ENCODE measurements at regions of chr2 and their contacts with region 1.

Region 1: GRCh38 chr2:54558188-54559005 is 102.3 kb downstream of the SPTBN1 start:
- DNase-seq: peak; percentile 71 to 72
- H3K4me3 ChIP-seq: peak overlapping the region; percentile 84 to 99 (median 94)
- H3K27ac ChIP-seq: peak overlapping the region; percentile 80
- H3K4me1 ChIP-seq: peaks cover 3 to 11% (median 8%) of the 10 kb centered on the region in 4 experiments
- H3K27me3 ChIP-seq: no peaks in the 10 kb centered on the region
- CTCF ChIP-seq: no peak
- EP300 ChIP-seq: no peak; a peak in 1 of 3 replicates
- POLR2A ChIP-seq: peak; percentile 66 to 87; a peak in 2 of 3 replicates
- RAD21 ChIP-seq: no peak

Region 2: GRCh38 chr2:54522624-54523281 is 35.6 kb before region 1 on chr2:
- CTCF ChIA-PET with region 1: interaction called, 21 read pairs
- POLR2A ChIA-PET with region 1: interaction called, 9 read pairs
- DNase-seq: peak; percentile 50 to 68
- H3K4me3 ChIP-seq: no peak overlapping the region
- H3K27ac ChIP-seq: no peak overlapping the region
- H3K4me1 ChIP-seq: peaks cover 0 to 3% (median under 1%) of the 10 kb centered on the region in 4 experiments; a peak in 3 of 7 replicates
- H3K27me3 ChIP-seq: no peaks in the 10 kb centered on the region
- CTCF ChIP-seq: peak; percentile 62 to 77 (median 76)
- EP300 ChIP-seq: no peak
- POLR2A ChIP-seq: no peak
- RAD21 ChIP-seq: peak; percentile 87 to 90

Region 3: DNA sequence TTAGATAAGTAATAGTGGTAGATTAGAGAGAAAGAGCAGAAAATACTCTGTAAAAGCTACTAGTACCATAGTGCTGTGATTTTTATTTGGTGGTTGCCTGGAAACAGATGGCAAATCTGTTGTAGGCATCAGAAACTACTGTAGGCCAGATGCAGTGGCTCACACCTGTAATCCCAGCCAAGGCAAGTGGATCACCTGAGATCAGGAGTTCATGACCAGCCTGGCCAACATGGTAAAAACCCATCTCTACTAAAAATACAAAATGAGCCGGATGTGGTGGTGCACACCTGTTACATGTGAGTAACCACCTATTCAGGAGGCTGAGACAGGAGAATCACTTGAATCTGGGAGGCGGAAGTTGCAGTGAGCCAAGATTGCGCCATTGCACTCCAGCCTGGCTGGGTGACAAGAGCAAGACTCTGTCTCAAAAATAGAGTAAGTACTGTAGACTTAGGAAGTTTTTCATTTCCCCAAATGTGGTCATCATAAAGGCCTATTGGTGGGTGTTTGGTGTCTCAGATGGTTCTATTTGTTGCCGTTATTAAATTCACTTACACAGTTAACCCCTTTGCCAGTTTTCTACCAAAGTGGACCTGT is 22.7 kb before region 1 on chr2:
- CTCF ChIA-PET with region 1: interaction called, 6 read pairs
- POLR2A ChIA-PET with region 1: interaction called, 30 read pairs
- DNase-seq: no peak
- H3K4me3 ChIP-seq: no peak overlapping the region
- H3K27ac ChIP-seq: no peak overlapping the region
- H3K4me1 ChIP-seq: no peaks in the 10 kb centered on the region
- H3K27me3 ChIP-seq: no peaks in the 10 kb centered on the region
- CTCF ChIP-seq: no peak
- EP300 ChIP-seq: no peak
- POLR2A ChIP-seq: no peak
- RAD21 ChIP-seq: no peak

Region 4: DNA sequence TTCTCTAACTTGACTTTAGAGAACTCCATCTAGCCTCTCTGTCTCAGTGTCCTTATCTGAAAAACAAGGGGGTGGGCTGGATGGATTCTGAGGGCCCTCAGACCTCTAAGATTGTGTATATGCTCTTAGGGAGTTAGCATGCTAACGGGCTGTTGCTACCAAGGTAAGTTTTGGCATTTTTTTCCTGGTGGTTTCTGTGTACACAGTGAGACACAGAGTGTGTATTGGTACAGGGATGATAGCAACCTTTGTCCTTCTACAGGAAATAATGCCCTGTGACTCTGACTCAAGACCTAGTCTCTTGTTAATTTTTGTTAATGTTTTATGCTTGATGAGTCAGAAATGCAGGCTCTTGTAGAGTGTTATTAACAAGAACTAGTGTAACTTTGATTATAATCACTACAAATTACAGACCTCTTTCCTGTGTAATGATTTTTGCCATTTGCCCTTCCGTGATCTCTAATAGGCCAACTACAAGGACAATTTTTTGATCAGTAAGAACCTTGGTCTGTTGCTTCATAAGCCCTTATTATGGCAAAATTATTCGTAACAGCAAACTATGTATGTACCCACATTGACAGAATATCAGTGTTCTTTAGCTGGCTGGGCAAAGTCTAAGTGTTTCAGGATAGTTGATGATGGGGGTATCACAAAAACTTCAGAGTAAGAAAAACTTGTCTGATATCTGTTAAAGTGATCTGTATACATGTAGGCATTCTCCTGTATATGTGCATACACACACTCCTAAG is 12.5 kb before region 1 on chr2:
- CTCF ChIA-PET with region 1: interaction called, 16 read pairs
- POLR2A ChIA-PET with region 1: interaction called, 30 read pairs
- DNase-seq: no peak
- H3K4me3 ChIP-seq: no peak overlapping the region
- H3K27ac ChIP-seq: no peak overlapping the region
- H3K4me1 ChIP-seq: peaks cover 2 to 4% (median 2%) of the 10 kb centered on the region in 4 experiments; a peak in 3 of 7 replicates
- H3K27me3 ChIP-seq: no peaks in the 10 kb centered on the region
- CTCF ChIP-seq: no peak
- EP300 ChIP-seq: no peak
- POLR2A ChIP-seq: no peak
- RAD21 ChIP-seq: no peak

Region 5: GRCh38 chr2:54570925-54571694 is 12.7 kb after region 1 on chr2:
- CTCF ChIA-PET with region 1: interaction called, 5 read pairs
- POLR2A ChIA-PET with region 1: interaction called, 31 read pairs
- DNase-seq: no peak
- H3K4me3 ChIP-seq: no peak overlapping the region
- H3K27ac ChIP-seq: no peak overlapping the region
- H3K4me1 ChIP-seq: peaks cover 5 to 22% (median 17%) of the 10 kb centered on the region in 4 experiments
- H3K27me3 ChIP-seq: no peaks in the 10 kb centered on the region
- CTCF ChIP-seq: no peak
- EP300 ChIP-seq: no peak
- POLR2A ChIP-seq: no peak
- RAD21 ChIP-seq: no peak

Region 6: DNA sequence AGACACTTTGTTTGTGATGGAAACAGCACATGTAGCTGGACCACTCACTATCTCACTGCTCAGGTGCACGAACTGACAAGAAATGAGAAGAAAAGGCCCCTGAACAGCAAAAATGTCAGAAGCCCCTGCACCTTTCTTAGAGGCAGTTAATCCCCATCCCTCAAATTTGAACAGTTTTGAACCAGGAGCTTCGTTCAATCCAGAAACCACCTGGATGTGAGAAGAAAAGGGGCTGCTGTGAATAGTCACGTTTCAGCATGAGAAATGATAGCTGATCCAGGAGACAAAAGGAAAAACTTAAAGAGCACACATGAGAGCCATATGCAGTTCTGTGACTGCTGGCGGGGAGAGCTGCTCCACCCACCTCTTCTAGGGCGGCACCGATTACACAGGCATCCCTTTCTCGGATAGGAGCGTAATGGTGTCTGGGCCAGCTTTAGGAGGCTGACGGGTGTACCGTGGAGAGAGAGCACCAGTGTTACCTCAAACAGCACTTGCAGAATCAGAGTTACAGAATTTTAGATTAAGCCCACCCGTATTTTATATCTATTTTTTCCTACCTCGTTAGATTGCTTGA is 48.1 kb after region 1 on chr2:
- CTCF ChIA-PET with region 1: interaction called, 6 read pairs
- POLR2A ChIA-PET with region 1: interaction called, 13 read pairs
- DNase-seq: no peak
- H3K4me3 ChIP-seq: no peak overlapping the region
- H3K27ac ChIP-seq: no peak overlapping the region
- H3K4me1 ChIP-seq: peaks cover 3 to 24% (median 9%) of the 10 kb centered on the region in 4 experiments
- H3K27me3 ChIP-seq: no peaks in the 10 kb centered on the region
- CTCF ChIP-seq: no peak
- EP300 ChIP-seq: no peak
- POLR2A ChIP-seq: no peak
- RAD21 ChIP-seq: no peak

Region 7: DNA sequence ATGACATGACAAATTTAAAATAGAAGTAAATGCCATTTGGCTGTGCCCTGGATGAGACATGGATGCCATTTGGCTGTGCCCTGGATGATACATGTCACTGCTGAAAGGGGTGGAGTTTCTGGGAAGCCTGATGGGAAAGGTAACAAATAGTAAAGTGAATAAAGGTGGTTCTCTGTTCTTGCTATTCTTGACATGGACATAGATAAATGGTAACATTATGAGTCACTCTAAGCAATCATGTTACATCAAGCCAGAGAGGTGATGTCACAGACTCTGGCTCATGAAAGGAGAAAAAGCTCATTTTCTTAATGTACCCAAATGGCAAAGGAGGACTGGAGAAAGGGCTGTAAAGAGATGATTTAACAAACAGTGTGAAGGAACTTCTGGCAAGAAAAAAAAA is 251.4 kb after region 1 on chr2:
- CTCF ChIA-PET with region 1: no interaction called
- POLR2A ChIA-PET with region 1: no interaction called
- DNase-seq: no peak
- H3K4me3 ChIP-seq: no peak overlapping the region
- H3K27ac ChIP-seq: no peak overlapping the region
- H3K4me1 ChIP-seq: no peaks in the 10 kb centered on the region
- H3K27me3 ChIP-seq: no peaks in the 10 kb centered on the region
- CTCF ChIP-seq: no peak
- EP300 ChIP-seq: no peak
- POLR2A ChIP-seq: no peak
- RAD21 ChIP-seq: no peak

Measured in H1 (cell line).